Heart left ventricle (tissue), 16 donors: ENCODE measurements at regions of chr12 and their contacts with region 1.

Region 1: GRCh38 chr12:67648521-67649260 is at the start of gene DYRK2:
- DNase-seq: peak; percentile 83 to 92 (median 87)
- ATAC-seq: peak; percentile 40 to 82 (median 68)
- H3K4me3 ChIP-seq: peak within 1 kb of the TSS; percentile 74 to 99 (median 96)
- H3K27ac ChIP-seq: peak within 1 kb of the TSS; percentile 93 to 99 (median 98)
- H3K4me1 ChIP-seq: peaks cover 8 to 44% (median 29%) of the 10 kb centered on the region in 12 donors
- H3K27me3 ChIP-seq: no peaks in the 10 kb centered on the region
- CTCF ChIP-seq: peak in 6 of 12 donors; percentile 21 to 43 (median 27)
- POLR2A ChIP-seq: peak in 1 of 2 donors; percentile 93
- total RNA-seq, gene DYRK2: 30.5 to 62.9 (median 37.9) TPM

Region 2: DNA sequence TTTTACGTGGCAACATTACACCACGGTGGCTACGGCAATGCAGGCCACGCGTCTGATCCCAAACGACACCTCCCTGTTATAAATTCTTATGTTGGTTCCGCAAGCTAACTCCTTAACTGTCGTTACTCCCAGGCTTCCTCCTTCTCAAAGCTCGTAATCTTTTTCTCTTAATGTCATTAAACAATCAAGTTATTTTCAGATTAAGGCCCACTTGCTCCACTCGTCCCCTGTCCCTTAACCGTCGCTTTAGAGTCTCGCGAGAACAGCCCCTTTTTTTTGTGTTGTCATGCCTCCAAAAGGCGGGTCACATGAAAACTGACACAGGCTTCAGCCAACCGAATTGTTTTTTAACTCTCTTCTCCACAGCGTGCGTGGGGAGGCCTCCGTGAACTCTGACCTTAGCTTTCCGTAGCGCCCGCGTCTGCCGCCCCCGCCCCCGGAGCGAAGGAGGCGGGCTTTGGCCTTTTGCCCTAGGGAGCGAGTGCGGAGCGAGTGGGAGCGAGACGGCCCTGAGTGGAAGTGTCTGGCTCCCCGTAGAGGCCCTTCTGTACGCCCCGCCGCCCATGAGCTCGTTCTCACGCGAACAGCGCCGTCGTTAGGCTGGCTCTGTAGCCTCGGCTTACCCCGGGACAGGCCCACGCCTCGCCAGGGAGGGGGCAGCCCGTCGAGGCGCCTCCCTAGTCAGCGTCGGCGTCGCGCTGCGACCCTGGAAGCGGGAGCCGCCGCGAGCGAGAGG is 379.6 kb before region 1 on chr12 and contains the start of gene CAND1:
- intact Hi-C with region 1: loop called in 2 of 10 experiments (anchors 2 to 10 kb)
- DNase-seq: peak; percentile 97 to 98 (median 98)
- ATAC-seq: peak; percentile 93 to 95 (median 94)
- H3K4me3 ChIP-seq: peak within 1 kb of the TSS; percentile 81 to 91 (median 85)
- H3K27ac ChIP-seq: peak within 1 kb of the TSS; percentile 92 to 99 (median 97)
- H3K4me1 ChIP-seq: peaks cover 3 to 46% (median 33%) of the 10 kb centered on the region in 12 donors
- H3K27me3 ChIP-seq: no peaks in the 10 kb centered on the region
- CTCF ChIP-seq: peak in 4 of 12 donors; percentile 12 to 51 (median 31)
- POLR2A ChIP-seq: peak in 1 of 2 donors; percentile 88
- total RNA-seq, gene CAND1: 16.0 to 69.0 (median 35.9) TPM

Region 3: DNA sequence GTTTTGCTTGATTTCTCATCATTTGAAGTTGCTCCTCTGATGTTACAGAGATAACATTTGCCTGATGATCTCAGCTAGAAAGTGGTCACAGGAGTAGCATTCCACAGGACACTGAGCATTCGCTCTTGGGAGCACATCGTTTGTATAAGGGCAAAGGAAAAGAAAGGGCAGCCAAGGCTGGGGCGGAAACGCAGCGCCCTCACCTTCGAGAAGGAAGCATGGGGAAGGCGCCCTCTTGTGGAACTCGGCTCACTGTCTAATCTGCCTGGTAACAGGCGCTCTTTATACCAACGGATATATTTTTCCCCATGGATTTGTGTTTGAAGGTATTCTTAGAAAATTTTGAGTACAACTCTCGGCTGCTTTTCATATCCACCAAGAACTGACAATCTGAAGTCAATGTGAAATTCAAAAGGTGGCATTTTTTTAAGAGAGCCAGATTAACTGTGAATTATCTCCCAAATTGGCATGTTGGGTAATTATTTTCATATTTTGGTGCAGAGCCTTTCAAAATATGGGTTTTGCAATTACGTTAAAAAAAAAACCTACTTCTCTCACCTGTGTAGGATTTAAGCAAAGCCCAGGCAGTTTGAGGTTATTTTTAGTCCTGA is 206.8 kb before region 1 on chr12:
- intact Hi-C with region 1: loop called in 9 of 10 experiments (anchors 2 to 10 kb)
- DNase-seq: peak; percentile 85 to 92 (median 87)
- ATAC-seq: peak; percentile 94 to 98 (median 96)
- H3K4me3 ChIP-seq: peak overlapping the region in 6 of 12 donors; percentile 3 to 49 (median 23)
- H3K27ac ChIP-seq: peak overlapping the region in 11 of 12 donors; percentile 3 to 52 (median 33)
- H3K4me1 ChIP-seq: peaks cover 0 to 18% (median 11%) of the 10 kb centered on the region in 12 donors
- H3K27me3 ChIP-seq: no peaks in the 10 kb centered on the region
- CTCF ChIP-seq: peak; percentile 67 to 92 (median 84)
- POLR2A ChIP-seq: no peak

Region 4: GRCh38 chr12:67592216-67593011 is 56.3 kb before region 1 on chr12:
- intact Hi-C with region 1: no loop called
- DNase-seq: peak in 1 of 5 donors; percentile 28
- ATAC-seq: peak in 3 of 4 donors; percentile 61 to 77 (median 76)
- H3K4me3 ChIP-seq: no peak overlapping the region
- H3K27ac ChIP-seq: peak overlapping the region in 4 of 12 donors; percentile 11 to 27 (median 24)
- H3K4me1 ChIP-seq: peaks cover 0 to 33% (median 8%) of the 10 kb centered on the region in 12 donors
- H3K27me3 ChIP-seq: no peaks in the 10 kb centered on the region
- CTCF ChIP-seq: no peak
- POLR2A ChIP-seq: no peak

Region 5: GRCh38 chr12:67710582-67710981 is 61.9 kb after region 1 on chr12:
- intact Hi-C with region 1: loop called in 3 of 10 experiments (anchors 5 to 10 kb)
- DNase-seq: no peak
- ATAC-seq: peak in 3 of 4 donors; percentile 46 to 74 (median 55)
- H3K4me3 ChIP-seq: no peak overlapping the region
- H3K27ac ChIP-seq: peak overlapping the region in 6 of 12 donors; percentile 30 to 73 (median 64)
- H3K4me1 ChIP-seq: peaks cover 0 to 27% (median 8%) of the 10 kb centered on the region in 12 donors
- H3K27me3 ChIP-seq: no peaks in the 10 kb centered on the region
- CTCF ChIP-seq: no peak
- POLR2A ChIP-seq: no peak

Region 6: DNA sequence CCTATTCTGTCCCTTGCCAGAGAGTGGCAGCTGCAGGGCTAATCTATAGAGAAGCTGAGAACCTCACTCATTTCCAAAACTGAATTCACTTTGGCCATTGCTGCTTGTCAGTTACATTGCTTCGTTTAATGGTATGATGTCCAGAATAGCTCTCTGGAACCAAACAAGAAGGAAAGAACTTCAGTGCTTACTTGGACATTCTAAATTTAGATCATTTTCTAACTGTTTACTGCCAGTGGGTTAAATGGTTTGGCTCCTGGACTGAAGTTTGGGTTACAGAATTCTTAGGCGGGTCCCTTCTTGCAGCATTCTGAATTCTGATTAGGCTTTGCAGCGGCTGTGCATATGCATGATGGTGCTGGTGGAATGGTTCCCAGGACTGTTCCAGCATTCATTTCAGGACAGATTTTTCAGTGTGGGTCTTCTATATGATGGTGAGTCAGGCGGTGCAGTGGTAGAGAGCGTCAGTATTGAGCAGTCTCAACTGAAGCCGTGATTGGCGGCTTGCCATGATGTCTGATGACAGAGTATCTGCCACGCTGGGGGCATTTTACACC is 148.6 kb after region 1 on chr12:
- intact Hi-C with region 1: loop called in 2 of 10 experiments (anchors 5 to 10 kb)
- DNase-seq: peak in 4 of 5 donors; percentile 21 to 53 (median 30)
- ATAC-seq: peak; percentile 74 to 86 (median 80)
- H3K4me3 ChIP-seq: peak overlapping the region in 2 of 12 donors; percentile 10 to 22
- H3K27ac ChIP-seq: peak overlapping the region; percentile 7 to 82 (median 38)
- H3K4me1 ChIP-seq: peaks cover 0 to 36% (median 19%) of the 10 kb centered on the region in 12 donors
- H3K27me3 ChIP-seq: no peaks in the 10 kb centered on the region
- CTCF ChIP-seq: no peak
- POLR2A ChIP-seq: no peak

Region 7: GRCh38 chr12:67943226-67943892 is 294.7 kb after region 1 on chr12:
- intact Hi-C with region 1: loop called (anchors 2 to 5 kb)
- DNase-seq: peak in 4 of 5 donors; percentile 31 to 68 (median 65)
- ATAC-seq: peak; percentile 63 to 88 (median 86)
- H3K4me3 ChIP-seq: no peak overlapping the region
- H3K27ac ChIP-seq: peak overlapping the region in 8 of 12 donors; percentile 6 to 65 (median 28)
- H3K4me1 ChIP-seq: peaks cover 0 to 25% (median 7%) of the 10 kb centered on the region in 12 donors
- H3K27me3 ChIP-seq: no peaks in the 10 kb centered on the region
- CTCF ChIP-seq: peak; percentile 63 to 85 (median 78)
- POLR2A ChIP-seq: no peak